Common myeloid progenitor, CD34-positive (primary cell): ENCODE measurements at regions of chr5 and their contacts with region 1.

Region 1: GRCh38 chr5:177535125-177535524 is 18.4 kb upstream of the DDX41 start:
- DNase-seq: no peak
- H3K4me3 ChIP-seq: no peak overlapping the region
- H3K27ac ChIP-seq: no peak overlapping the region
- H3K4me1 ChIP-seq: no peaks in the 10 kb centered on the region
- H3K27me3 ChIP-seq: no peaks in the 10 kb centered on the region

Region 2: GRCh38 chr5:177336112-177336511 is 199.0 kb before region 1 on chr5:
- CTCF ChIA-PET with region 1: no interaction called
- POLR2A ChIA-PET with region 1: no interaction called
- DNase-seq: peak; percentile 83 to 90 (median 89)
- H3K4me3 ChIP-seq: no peak overlapping the region
- H3K27ac ChIP-seq: no peak overlapping the region
- H3K4me1 ChIP-seq: peaks cover 6 to 27% (median 24%) of the 10 kb centered on the region in 4 experiments
- H3K27me3 ChIP-seq: no peaks in the 10 kb centered on the region

Region 3: DNA sequence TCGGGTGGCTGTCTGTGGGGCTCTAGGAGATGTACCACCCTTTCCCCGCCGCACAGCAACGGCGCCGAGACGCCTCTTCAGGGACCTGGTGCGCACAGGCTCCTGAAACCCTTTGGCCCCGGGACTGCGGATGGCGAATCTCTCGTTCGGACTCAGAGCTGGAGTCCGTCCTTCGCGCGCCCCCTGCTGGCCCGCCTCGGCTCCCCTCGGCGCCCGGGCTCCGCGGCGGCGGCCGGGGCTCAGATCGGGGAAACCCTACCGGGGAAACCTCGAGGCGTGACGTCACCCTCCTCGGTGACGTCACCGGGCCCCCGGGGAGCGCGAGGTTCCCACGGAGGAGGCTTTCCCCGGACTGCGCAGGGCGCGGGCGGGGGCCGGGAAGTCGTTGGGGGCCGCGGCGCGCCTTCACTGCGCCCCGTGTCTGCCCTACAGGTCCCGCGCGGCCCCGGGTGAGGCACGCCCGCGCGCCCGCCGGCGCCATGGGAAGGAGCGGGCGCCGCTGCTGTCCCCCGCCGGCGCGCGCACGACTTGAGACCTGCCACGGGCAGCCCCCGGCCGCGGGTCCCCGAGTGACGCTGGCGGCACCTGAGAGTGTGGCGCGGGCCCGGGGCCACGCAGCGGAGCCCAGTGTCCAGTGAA is 80.6 kb before region 1 on chr5:
- CTCF ChIA-PET with region 1: no interaction called
- POLR2A ChIA-PET with region 1: no interaction called
- DNase-seq: peak; percentile 88 to 92 (median 91)
- H3K4me3 ChIP-seq: peak overlapping the region; percentile 68 to 87 (median 77)
- H3K27ac ChIP-seq: peak overlapping the region in 1 of 2 experiments; percentile 68
- H3K4me1 ChIP-seq: peaks cover 0 to 40% (median 39%) of the 10 kb centered on the region in 4 experiments
- H3K27me3 ChIP-seq: no peaks in the 10 kb centered on the region

Region 4: DNA sequence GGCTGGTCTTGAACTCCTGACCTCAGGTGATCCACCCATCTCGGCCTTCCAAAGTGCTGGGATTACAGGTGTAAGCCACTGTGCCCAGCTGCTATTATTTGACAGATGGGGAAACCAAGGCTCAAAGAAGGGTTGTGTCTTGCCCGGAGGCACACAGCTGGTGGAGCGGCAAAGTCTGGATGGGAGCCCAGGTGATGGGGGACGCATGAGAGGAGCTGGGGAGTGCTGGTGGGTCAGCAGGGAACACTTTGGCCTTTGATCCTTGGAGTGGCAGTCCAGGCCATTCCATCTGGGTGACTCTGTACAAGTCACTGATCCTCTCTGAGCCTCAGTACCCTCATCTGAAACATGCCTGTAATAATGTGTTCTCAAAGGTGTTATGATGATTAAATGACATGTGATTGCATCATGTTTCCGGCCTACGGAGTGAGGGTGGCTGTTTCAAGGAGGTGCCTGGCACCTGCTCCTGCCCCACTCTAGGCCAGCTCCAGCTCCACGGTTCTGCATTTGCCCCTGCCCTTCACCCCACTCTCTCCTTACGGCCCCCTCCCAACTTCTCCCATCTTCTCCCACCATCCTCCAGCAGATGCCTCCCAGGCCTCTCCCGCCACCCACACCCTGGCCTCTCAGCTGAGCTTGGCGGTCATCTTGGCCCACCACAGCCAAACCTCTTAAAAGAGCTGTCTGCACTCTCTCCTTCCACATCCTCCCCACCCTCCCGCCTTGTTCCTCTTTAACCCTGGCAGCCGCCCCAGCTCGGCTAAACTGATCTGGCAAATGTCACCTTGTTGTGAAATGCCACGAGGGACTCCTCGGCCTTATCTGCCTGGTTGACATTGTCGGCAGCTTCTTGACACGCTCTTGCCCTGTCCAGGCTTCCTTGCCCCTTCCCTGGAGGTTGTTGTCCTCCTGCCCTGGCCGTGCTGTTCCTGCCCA is 56.1 kb before region 1 on chr5:
- CTCF ChIA-PET with region 1: no interaction called
- POLR2A ChIA-PET with region 1: no interaction called
- DNase-seq: peak; percentile 70 to 89 (median 86)
- H3K4me3 ChIP-seq: no peak overlapping the region
- H3K27ac ChIP-seq: peak overlapping the region in 1 of 2 experiments; percentile 56
- H3K4me1 ChIP-seq: peaks cover 0 to 46% (median 40%) of the 10 kb centered on the region in 4 experiments
- H3K27me3 ChIP-seq: no peaks in the 10 kb centered on the region

Region 5: DNA sequence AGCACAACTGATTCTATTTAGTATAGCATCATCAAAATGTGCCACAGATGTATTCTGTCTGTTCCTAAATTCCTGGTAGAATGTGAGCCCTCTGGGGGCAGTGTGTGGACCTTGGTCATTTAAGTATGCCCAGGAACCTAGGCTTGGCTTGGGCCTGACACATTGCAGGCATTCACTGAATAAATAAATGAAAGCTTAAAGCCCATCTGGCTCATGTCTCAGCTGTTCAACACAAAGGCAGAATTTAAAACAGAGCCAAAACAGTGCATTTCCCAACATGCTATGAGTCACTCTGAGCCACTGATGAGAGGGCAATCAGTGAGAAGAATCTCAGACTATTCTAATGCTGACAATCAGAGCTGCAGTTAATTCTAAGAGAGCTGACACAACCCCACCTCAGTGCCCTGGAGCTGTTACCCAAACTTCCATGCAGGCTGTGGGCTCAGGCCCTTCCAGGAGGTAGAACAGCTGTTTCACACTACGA is 11.2 kb after region 1 on chr5:
- CTCF ChIA-PET with region 1: interaction called, 16 read pairs
- POLR2A ChIA-PET with region 1: interaction called, 3 read pairs
- DNase-seq: peak in 2 of 3 donors; percentile 18 to 24
- H3K4me3 ChIP-seq: no peak overlapping the region
- H3K27ac ChIP-seq: no peak overlapping the region
- H3K4me1 ChIP-seq: peaks cover 0 to 12% (median 0%) of the 10 kb centered on the region in 4 experiments
- H3K27me3 ChIP-seq: no peaks in the 10 kb centered on the region